PC-9 (cell line): ENCODE measurements at regions of chr20 and their contacts with region 1.

Region 1: GRCh38 chr20:37345339-37346230 is at the start of gene SRC:
- DNase-seq: peak in 1 of 2 experiments; percentile 88
- H3K4me3 ChIP-seq: peak within 1 kb of the TSS; percentile 76
- H3K27ac ChIP-seq: peak within 1 kb of the TSS; percentile 69
- H3K4me1 ChIP-seq: peaks cover 26% of the 10 kb centered on the region
- H3K27me3 ChIP-seq: no peaks in the 10 kb centered on the region
- CTCF ChIP-seq: no peak
- total RNA-seq, gene SRC: 56.8 and 58.4 TPM in 2 replicates

Region 2: DNA sequence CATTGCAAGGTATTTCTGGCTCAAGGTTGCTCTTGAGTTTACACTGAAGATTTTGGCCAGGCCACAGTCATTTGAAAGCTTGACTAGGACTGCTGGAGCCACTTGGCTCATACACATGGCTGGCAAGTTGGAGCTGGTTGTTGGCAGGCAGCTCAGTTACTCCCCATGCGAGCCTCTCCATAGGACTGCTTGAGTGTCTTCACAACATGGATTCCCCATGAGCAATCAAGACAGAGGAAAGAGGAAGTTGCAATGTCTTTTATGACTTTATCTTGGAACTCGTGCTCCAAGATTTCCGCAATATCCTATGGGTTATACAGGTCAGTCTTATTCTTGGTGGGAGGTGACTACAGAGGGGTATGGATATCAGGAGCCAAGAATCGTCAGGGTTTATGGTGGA is 57.5 kb before region 1 on chr20:
- CTCF ChIA-PET with region 1: no interaction called
- POLR2A ChIA-PET with region 1: interaction called, 6 read pairs
- intact Hi-C with region 1: loop called (anchors 2 kb)
- DNase-seq: no peak
- H3K4me3 ChIP-seq: no peak overlapping the region
- H3K27ac ChIP-seq: no peak overlapping the region
- H3K4me1 ChIP-seq: peaks cover 10% of the 10 kb centered on the region; the same call in 1 of the 2 replicates
- H3K27me3 ChIP-seq: no peaks in the 10 kb centered on the region
- CTCF ChIP-seq: no peak

Region 3: DNA sequence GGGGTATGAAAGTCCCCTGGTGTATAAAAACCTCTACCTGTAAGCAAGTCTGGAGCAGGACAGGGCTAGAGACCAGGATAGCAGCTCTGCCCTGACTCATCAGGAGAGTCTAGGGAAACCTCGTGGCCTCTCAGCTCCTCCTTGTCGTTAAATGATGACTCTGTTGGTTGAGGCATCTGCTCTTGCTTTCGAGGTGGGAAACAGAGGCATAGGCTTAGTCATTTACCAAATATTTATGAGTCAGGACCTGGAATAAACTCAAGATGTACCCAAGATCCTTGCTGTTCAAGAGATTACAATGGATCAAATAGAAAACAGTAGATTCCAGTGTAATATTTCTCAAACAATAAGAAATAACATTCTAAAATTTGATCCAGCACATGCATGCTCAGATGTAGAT is 50.6 kb before region 1 on chr20:
- CTCF ChIA-PET with region 1: no interaction called
- POLR2A ChIA-PET with region 1: interaction called, 6 read pairs
- intact Hi-C with region 1: loop called (anchors 2 kb)
- DNase-seq: peak; percentile 72 to 94
- H3K4me3 ChIP-seq: peak overlapping the region; percentile 25; the same call in 1 of the 2 replicates
- H3K27ac ChIP-seq: peak overlapping the region; percentile 64
- H3K4me1 ChIP-seq: peaks cover 33% of the 10 kb centered on the region
- H3K27me3 ChIP-seq: no peaks in the 10 kb centered on the region
- CTCF ChIP-seq: no peak

Region 4: GRCh38 chr20:37317994-37318640 is 27.5 kb before region 1 on chr20:
- CTCF ChIA-PET with region 1: no interaction called
- POLR2A ChIA-PET with region 1: interaction called, 24 read pairs
- intact Hi-C with region 1: no loop called
- DNase-seq: no peak
- H3K4me3 ChIP-seq: no peak overlapping the region
- H3K27ac ChIP-seq: no peak overlapping the region
- H3K4me1 ChIP-seq: no peaks in the 10 kb centered on the region
- H3K27me3 ChIP-seq: no peaks in the 10 kb centered on the region
- CTCF ChIP-seq: no peak

Region 5: GRCh38 chr20:37384683-37385174 is 39.1 kb after region 1 on chr20:
- CTCF ChIA-PET with region 1: interaction called, 12 read pairs
- POLR2A ChIA-PET with region 1: no interaction called
- intact Hi-C with region 1: no loop called
- DNase-seq: peak in 1 of 2 experiments; percentile 55
- H3K4me3 ChIP-seq: no peak overlapping the region
- H3K27ac ChIP-seq: no peak overlapping the region
- H3K4me1 ChIP-seq: peaks cover 8% of the 10 kb centered on the region; the same call in 1 of the 2 replicates
- H3K27me3 ChIP-seq: no peaks in the 10 kb centered on the region
- CTCF ChIP-seq: peak; percentile 80

Region 6: GRCh38 chr20:37527638-37528441 is 182.3 kb after region 1 on chr20 and contains the start of gene BLCAP:
- CTCF ChIA-PET with region 1: no interaction called
- POLR2A ChIA-PET with region 1: no interaction called
- intact Hi-C with region 1: loop called (anchors 2 kb)
- DNase-seq: peak; percentile 70 to 89
- H3K4me3 ChIP-seq: peak within 1 kb of the TSS; percentile 88
- H3K27ac ChIP-seq: peak within 1 kb of the TSS; percentile 86
- H3K4me1 ChIP-seq: peaks cover 41% of the 10 kb centered on the region
- H3K27me3 ChIP-seq: no peaks in the 10 kb centered on the region
- CTCF ChIP-seq: no peak
- total RNA-seq, gene BLCAP: 99.9 and 109 TPM in 2 replicates